Psoas muscle (tissue), 8 donors: ENCODE measurements at regions of chr15 and their contacts with region 1.

Region 1: DNA sequence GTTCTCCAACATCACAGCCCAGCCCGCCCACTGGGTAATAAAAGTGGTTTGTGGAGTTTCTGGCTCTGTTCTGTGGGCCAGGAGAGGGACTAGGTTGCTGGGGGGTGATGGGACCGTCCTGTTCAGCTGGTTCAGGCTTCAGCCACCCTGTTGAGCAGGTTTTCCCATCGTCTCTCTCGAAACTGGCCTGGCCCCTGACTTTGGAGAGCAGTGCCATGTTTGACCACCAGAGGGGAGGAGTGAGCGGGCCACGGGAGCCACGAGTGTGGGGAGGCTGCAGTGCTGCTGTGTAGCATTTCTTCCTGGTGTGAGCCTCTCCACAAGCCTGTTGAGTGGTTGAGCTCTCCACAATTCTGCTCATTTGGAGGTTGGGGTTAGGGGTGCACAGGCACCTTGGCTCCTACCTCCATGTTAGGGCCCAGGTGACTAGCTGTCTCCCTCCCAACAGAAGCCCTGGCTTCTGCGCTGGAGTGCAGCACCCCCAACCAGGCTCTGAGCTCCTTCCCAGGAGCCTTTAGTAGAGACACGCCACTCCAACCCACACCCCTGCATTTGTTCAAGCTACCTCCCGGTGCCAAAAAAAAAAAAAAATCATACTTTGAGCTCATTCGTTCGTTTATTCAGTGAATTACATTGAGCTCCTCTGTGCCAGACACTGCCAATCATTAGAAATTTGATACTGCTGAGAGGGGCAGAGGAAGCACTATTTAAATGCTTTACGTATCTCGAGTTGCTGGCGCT is 13.9 kb downstream of the SPINT1 start:
- DNase-seq: peak; percentile 72 to 81
- ATAC-seq: peak; percentile 89 to 96 (median 93)
- H3K4me3 ChIP-seq: no peak overlapping the region
- H3K27ac ChIP-seq: no peak overlapping the region
- H3K4me1 ChIP-seq: peaks cover 6% of the 10 kb centered on the region
- H3K27me3 ChIP-seq: no peaks in the 10 kb centered on the region
- CTCF ChIP-seq: peak; percentile 92

Region 2: GRCh38 chr15:40477642-40478327 is 380.0 kb before region 1 on chr15:
- intact Hi-C with region 1: no loop called
- DNase-seq: no peak
- ATAC-seq: no peak
- H3K4me3 ChIP-seq: no peak overlapping the region
- H3K27ac ChIP-seq: no peak overlapping the region
- H3K4me1 ChIP-seq: no peaks in the 10 kb centered on the region
- H3K27me3 ChIP-seq: no peaks in the 10 kb centered on the region
- CTCF ChIP-seq: no peak

Region 3: GRCh38 chr15:40506964-40507571 is 350.7 kb before region 1 on chr15:
- intact Hi-C with region 1: loop called in 1 of 2 experiments (anchors 10 kb)
- DNase-seq: peak; percentile 75 to 85
- ATAC-seq: peak; percentile 75 to 84 (median 81)
- H3K4me3 ChIP-seq: peak overlapping the region; percentile 57
- H3K27ac ChIP-seq: peak overlapping the region; percentile 21
- H3K4me1 ChIP-seq: peaks cover 16% of the 10 kb centered on the region
- H3K27me3 ChIP-seq: no peaks in the 10 kb centered on the region
- CTCF ChIP-seq: peak; percentile 64

Region 4: GRCh38 chr15:41180206-41180789 is 322.5 kb after region 1 on chr15:
- intact Hi-C with region 1: loop called (anchors 5 kb)
- DNase-seq: no peak
- ATAC-seq: no peak
- H3K4me3 ChIP-seq: no peak overlapping the region
- H3K27ac ChIP-seq: no peak overlapping the region
- H3K4me1 ChIP-seq: no peaks in the 10 kb centered on the region
- H3K27me3 ChIP-seq: no peaks in the 10 kb centered on the region
- CTCF ChIP-seq: no peak